GM10248 (cell line): ENCODE measurements at regions of chr11 and their contacts with region 1.

Region 1: GRCh38 chr11:119728651-119729580 is at the start of gene NECTIN1:
- DNase-seq: peak; percentile 92
- CTCF ChIP-seq: peak; percentile 81

Region 2: GRCh38 chr11:119673759-119674336 is 55.1 kb before region 1 on chr11:
- CTCF ChIA-PET with region 1: interaction called, 68 read pairs
- POLR2A ChIA-PET with region 1: interaction called, 11 read pairs
- DNase-seq: peak; percentile 87
- CTCF ChIP-seq: peak; percentile 77

Region 3: DNA sequence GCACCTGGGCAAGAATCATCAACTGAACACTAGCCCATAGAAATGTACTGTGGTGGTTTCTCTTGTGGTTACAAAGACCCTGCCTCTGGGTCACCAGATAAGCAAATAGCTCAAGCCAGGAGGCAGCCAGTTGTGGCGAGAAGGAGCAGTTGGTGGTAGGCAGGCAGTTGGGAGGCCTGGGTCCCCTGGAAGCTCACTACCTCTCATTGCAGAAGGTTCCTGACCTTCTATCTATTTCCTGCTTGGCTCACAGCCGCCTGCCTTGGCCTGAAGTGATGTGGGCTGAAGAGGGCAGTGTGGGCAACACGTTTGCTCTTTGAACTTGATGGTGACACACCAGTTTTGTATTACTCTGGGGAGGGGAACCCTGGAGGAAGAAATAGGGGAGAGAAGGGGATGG is 34.6 kb before region 1 on chr11:
- CTCF ChIA-PET with region 1: interaction called, 34 read pairs
- POLR2A ChIA-PET with region 1: no interaction called
- DNase-seq: peak; percentile 50
- CTCF ChIP-seq: peak; percentile 21

Region 4: DNA sequence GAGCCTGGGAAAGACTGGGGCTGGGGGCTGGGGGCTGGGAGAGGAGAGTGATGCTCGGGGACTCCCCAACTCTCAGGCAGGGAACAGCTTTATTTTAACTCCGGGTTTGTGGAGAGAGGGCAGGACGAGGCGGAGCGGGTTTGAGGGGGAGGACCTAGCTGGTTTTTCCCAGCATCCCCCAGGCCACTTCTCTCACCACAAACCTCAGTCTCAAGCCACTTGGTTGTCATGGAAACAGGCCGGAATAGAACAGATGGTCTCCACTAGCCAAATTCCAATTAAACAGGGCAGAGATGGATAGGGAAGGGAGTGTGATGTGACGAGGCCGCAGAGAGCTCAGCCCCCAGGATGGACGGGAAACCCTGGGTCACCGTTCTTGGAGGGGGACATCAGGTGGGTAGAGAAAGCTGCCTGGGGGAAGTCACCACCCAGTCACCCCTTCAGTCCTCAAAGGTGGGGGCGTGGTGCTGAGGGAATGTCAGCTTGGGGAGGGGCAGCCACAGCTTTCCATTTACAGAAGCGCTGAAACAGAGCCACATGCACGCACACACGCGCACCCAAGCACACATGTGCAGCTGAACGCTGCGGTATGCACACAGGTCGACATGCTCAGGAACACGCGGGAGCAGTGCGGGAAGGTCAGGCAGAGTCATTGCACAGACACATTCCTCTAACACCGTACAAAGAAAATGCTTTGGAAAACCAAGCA is 19.1 kb before region 1 on chr11:
- CTCF ChIA-PET with region 1: interaction called, 29 read pairs
- POLR2A ChIA-PET with region 1: no interaction called
- DNase-seq: peak; percentile 75
- CTCF ChIP-seq: no peak

Region 5: DNA sequence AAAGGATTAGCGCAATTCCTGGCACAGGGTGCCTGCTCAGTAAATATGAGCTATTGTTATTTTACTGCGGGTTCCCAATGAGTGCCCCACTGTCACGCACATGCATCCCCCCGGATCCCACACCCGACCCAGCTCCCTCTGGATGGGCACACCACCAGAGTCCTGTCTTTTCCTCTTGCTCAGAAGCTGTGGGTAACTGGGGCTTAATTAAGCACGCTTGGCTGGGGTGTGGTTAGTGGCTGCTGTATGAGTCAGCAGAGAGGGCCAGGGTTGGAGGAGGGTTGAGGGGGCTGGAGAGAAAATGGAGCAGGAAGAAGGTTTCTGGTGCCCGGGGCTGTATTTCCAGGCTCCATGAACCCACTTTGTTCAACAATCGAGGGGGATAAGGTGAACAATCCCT is 30.4 kb after region 1 on chr11:
- CTCF ChIA-PET with region 1: interaction called, 78 read pairs
- POLR2A ChIA-PET with region 1: no interaction called
- DNase-seq: no peak
- CTCF ChIP-seq: no peak